Activated CD4-positive, alpha-beta memory T cell treated with anti-CD3 and anti-CD28 coated beads, Interleukin-2, amount 10 ng/mL, durations not matched to agents 7 days and 5 days (primary cell): ENCODE measurements at regions of chr9 and their contacts with region 1.

Region 1: GRCh38 chr9:77456829-77457437 is 191.2 kb downstream of the GNA14 start:
- DNase-seq: peak; percentile 87
- H3K4me3 Mint-ChIP-seq: no peak overlapping the region
- H3K27ac Mint-ChIP-seq: no peak overlapping the region
- H3K4me1 Mint-ChIP-seq: peaks cover 13% of the 10 kb centered on the region
- H3K27me3 Mint-ChIP-seq: no peaks in the 10 kb centered on the region

Region 2: DNA sequence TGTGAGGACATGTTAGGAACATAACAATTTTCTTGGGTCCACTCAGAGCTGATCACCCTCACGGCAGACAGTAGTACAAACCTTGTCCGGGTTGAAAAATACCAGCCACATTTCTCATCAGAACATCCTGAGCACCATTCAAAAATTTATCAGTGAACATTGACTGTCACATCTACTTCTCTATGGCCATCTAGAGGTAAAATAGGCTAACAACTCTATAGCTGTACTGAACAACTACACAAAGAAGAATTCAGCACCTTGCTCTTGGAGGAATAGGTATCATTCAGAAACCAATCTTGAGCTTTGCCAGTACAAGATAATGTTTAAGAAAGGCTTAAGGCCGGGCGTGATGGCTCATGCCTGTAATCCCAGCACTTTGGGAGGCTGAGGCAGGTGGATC is 384.9 kb before region 1 on chr9:
- CTCF ChIA-PET with region 1: no interaction called
- POLR2A ChIA-PET with region 1: no interaction called
- DNase-seq: no peak
- H3K4me3 Mint-ChIP-seq: no peak overlapping the region
- H3K27ac Mint-ChIP-seq: no peak overlapping the region
- H3K4me1 Mint-ChIP-seq: no peaks in the 10 kb centered on the region
- H3K27me3 Mint-ChIP-seq: peaks cover 1% of the 10 kb centered on the region

Region 3: GRCh38 chr9:77163884-77164283 is 293.0 kb before region 1 on chr9:
- CTCF ChIA-PET with region 1: interaction called, 18 read pairs
- POLR2A ChIA-PET with region 1: no interaction called
- DNase-seq: no peak
- H3K4me3 Mint-ChIP-seq: no peak overlapping the region
- H3K27ac Mint-ChIP-seq: no peak overlapping the region
- H3K4me1 Mint-ChIP-seq: peaks cover 1% of the 10 kb centered on the region
- H3K27me3 Mint-ChIP-seq: peaks cover 15% of the 10 kb centered on the region

Region 4: GRCh38 chr9:77328102-77328501 is 128.8 kb before region 1 on chr9:
- CTCF ChIA-PET with region 1: no interaction called
- POLR2A ChIA-PET with region 1: no interaction called
- DNase-seq: no peak
- H3K4me3 Mint-ChIP-seq: no peak overlapping the region
- H3K27ac Mint-ChIP-seq: no peak overlapping the region
- H3K4me1 Mint-ChIP-seq: peaks cover 9% of the 10 kb centered on the region
- H3K27me3 Mint-ChIP-seq: no peaks in the 10 kb centered on the region

Region 5: GRCh38 chr9:77442200-77442832 is 14.6 kb before region 1 on chr9:
- CTCF ChIA-PET with region 1: interaction called, 14 read pairs
- POLR2A ChIA-PET with region 1: no interaction called
- DNase-seq: no peak
- H3K4me3 Mint-ChIP-seq: no peak overlapping the region
- H3K27ac Mint-ChIP-seq: no peak overlapping the region
- H3K4me1 Mint-ChIP-seq: no peaks in the 10 kb centered on the region
- H3K27me3 Mint-ChIP-seq: peaks cover 9% of the 10 kb centered on the region

Region 6: GRCh38 chr9:77475641-77476473 is 18.9 kb after region 1 on chr9:
- CTCF ChIA-PET with region 1: interaction called, 70 read pairs
- POLR2A ChIA-PET with region 1: interaction called, 7 read pairs
- DNase-seq: peak; percentile 75
- H3K4me3 Mint-ChIP-seq: peak overlapping the region; percentile 54
- H3K27ac Mint-ChIP-seq: peak overlapping the region; percentile 99
- H3K4me1 Mint-ChIP-seq: peaks cover 40% of the 10 kb centered on the region
- H3K27me3 Mint-ChIP-seq: no peaks in the 10 kb centered on the region

Region 7: GRCh38 chr9:77495834-77496671 is 39.1 kb after region 1 on chr9:
- CTCF ChIA-PET with region 1: interaction called, 161 read pairs
- POLR2A ChIA-PET with region 1: no interaction called
- DNase-seq: no peak
- H3K4me3 Mint-ChIP-seq: no peak overlapping the region
- H3K27ac Mint-ChIP-seq: no peak overlapping the region
- H3K4me1 Mint-ChIP-seq: no peaks in the 10 kb centered on the region
- H3K27me3 Mint-ChIP-seq: peaks cover 22% of the 10 kb centered on the region

Region 8: GRCh38 chr9:77562019-77562748 is 105.3 kb after region 1 on chr9:
- CTCF ChIA-PET with region 1: no interaction called
- POLR2A ChIA-PET with region 1: no interaction called
- DNase-seq: no peak
- H3K4me3 Mint-ChIP-seq: no peak overlapping the region
- H3K27ac Mint-ChIP-seq: no peak overlapping the region
- H3K4me1 Mint-ChIP-seq: peaks cover 4% of the 10 kb centered on the region
- H3K27me3 Mint-ChIP-seq: peaks cover 19% of the 10 kb centered on the region